ENCODE measurements at regions of chr3 and their contacts with region 1.

Region 1: GRCh38 chr3:131960324-131960723 is 74.5 kb downstream of the CPNE4 start:
- DNase-seq: peak; percentile 51
- H3K4me3 Mint-ChIP-seq: no peak overlapping the region
- H3K27ac Mint-ChIP-seq: no peak overlapping the region
- H3K4me1 Mint-ChIP-seq: peaks cover 50% of the 10 kb centered on the region
- H3K27me3 Mint-ChIP-seq: no peaks in the 10 kb centered on the region
- CTCF ChIP-seq: no peak

Region 2: DNA sequence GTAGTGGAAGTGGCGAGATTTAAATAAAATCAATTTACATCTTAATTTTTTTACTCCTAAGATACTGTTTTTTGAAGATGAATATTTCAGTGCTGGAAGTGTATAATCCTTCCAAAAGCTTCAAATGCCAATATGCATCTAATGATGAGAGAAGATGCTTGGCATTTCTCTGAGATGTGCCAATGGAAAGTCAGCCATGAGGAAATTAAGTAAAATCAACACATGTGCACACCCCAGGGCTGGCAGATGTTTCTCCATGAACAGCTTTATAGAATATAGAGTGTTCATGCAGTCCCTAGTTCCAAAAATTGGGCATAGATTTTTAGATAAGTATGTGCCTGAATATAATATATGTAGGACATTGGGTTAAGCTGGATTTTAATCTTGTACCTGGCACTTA is 15.6 kb before region 1 on chr3:
- CTCF ChIA-PET with region 1: no interaction called
- intact Hi-C with region 1: loop called (anchors 1 kb)
- DNase-seq: no peak
- H3K4me3 Mint-ChIP-seq: no peak overlapping the region
- H3K27ac Mint-ChIP-seq: no peak overlapping the region
- H3K4me1 Mint-ChIP-seq: no peaks in the 10 kb centered on the region
- H3K27me3 Mint-ChIP-seq: no peaks in the 10 kb centered on the region
- CTCF ChIP-seq: no peak

Region 3: DNA sequence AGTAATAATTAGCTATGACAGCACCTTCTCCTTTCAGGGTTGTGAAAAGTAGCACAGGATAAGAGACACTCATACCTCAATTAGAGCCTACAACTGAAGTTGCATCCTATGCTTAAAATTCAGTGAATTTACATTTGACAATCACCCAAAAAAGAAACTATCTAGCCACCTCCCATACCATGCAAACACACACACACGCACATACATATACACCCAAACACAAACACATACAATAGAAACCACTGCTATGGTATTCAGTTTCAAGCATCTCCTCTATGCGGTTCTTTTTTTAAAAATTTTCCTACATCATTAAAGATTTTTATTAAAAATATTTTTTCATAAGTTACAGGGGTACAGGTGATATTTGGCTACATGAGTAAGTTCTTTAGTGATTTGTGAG is 17.0 kb after region 1 on chr3:
- CTCF ChIA-PET with region 1: no interaction called
- intact Hi-C with region 1: no loop called
- DNase-seq: no peak
- H3K4me3 Mint-ChIP-seq: no peak overlapping the region
- H3K27ac Mint-ChIP-seq: peak overlapping the region; percentile 25
- H3K4me1 Mint-ChIP-seq: peaks cover 14% of the 10 kb centered on the region
- H3K27me3 Mint-ChIP-seq: no peaks in the 10 kb centered on the region
- CTCF ChIP-seq: no peak

Region 4: DNA sequence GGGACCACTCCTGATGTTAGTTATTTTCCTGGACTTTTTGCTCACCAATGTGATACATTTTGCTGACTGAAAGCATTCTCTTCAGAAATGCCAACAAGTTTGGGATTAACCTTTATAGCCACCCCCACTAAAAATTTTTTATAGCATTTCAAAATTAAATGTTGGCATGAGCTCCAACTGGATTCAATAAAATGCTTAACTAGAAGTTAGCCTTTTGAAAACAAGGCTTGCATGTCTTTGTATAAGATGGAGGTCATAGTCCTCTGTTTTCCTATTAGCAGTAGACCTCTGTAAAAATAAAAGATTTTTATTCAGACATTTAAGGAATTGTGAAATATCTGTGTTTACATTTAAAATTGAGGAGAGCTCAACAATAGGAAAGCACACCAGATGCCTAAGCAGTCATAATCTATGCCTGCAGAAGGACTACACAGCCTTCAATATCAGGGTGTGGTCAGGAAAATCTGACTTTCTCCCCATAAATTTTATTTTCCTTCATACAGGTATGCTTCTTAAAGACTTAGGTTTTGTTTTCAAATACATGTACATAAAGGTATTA is 544.1 kb after region 1 on chr3:
- CTCF ChIA-PET with region 1: no interaction called
- intact Hi-C with region 1: no loop called
- DNase-seq: no peak
- H3K4me3 Mint-ChIP-seq: no peak overlapping the region
- H3K27ac Mint-ChIP-seq: no peak overlapping the region
- H3K4me1 Mint-ChIP-seq: no peaks in the 10 kb centered on the region
- H3K27me3 Mint-ChIP-seq: no peaks in the 10 kb centered on the region
- CTCF ChIP-seq: no peak

Measured in Calu3 (cell line).